Right ventricle myocardium superior (tissue), 1 donor: ENCODE measurements at regions of chrX and their contacts with region 1.

Region 1: DNA sequence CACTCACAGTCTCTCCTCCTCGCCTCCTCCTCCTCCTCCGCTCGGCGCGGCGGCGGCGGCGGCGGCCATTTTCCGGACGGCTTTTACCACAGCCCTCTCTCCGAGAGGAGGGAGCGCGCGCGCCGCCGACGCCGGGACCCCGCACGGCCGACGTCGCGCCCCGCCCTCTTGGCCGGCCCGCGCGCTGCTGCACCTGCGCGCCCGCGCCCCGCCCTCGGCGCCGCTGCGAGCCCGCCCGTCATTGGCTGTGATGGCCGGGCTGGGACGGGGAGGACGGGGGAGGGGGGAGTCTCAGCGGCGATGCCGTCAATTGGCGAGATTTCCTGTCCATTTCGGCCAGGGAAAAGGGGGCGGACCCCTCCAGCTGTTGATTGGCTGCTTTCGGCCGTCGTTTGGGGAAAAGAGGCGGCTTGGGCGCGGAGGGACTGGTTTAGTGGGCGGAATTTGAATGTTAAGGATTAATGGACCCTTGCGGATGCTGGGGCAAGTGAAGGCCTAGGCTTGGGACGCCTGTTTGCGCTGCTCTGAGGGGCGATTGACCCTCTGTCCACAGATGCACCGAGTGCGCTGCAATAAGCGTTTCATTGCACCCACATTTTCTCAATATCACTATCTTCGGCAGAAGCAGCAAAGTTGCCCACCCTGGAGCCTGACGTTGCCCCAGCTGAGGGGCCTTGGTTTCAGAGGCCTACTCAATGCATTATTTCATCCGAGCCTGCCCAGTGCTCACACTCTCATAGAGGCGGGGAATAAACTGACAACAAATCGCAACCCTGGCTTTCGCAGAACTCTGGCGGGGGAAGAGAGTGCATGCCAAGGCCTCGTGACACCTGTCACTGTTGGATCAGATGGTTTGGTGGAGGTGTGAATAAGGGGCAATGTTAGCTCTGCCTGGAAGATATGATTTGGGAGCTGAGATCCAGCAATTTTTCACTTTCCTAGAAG is at the start of gene MECP2:
- DNase-seq: peak; percentile 93
- ATAC-seq: peak; percentile 95
- total RNA-seq, gene MECP2: 30.5 TPM

Region 2: GRCh38 chrX:154046031-154046781 is 51.7 kb before region 1 on chrX:
- intact Hi-C with region 1: loop called (anchors 10 kb)
- DNase-seq: peak; percentile 60
- ATAC-seq: peak; percentile 66

Region 3: GRCh38 chrX:154063234-154063633 is 34.6 kb before region 1 on chrX:
- intact Hi-C with region 1: no loop called
- DNase-seq: no peak
- ATAC-seq: no peak